CD8-positive, alpha-beta memory T cell (primary cell): ENCODE measurements at regions of chr19 and their contacts with region 1.

Region 1: DNA sequence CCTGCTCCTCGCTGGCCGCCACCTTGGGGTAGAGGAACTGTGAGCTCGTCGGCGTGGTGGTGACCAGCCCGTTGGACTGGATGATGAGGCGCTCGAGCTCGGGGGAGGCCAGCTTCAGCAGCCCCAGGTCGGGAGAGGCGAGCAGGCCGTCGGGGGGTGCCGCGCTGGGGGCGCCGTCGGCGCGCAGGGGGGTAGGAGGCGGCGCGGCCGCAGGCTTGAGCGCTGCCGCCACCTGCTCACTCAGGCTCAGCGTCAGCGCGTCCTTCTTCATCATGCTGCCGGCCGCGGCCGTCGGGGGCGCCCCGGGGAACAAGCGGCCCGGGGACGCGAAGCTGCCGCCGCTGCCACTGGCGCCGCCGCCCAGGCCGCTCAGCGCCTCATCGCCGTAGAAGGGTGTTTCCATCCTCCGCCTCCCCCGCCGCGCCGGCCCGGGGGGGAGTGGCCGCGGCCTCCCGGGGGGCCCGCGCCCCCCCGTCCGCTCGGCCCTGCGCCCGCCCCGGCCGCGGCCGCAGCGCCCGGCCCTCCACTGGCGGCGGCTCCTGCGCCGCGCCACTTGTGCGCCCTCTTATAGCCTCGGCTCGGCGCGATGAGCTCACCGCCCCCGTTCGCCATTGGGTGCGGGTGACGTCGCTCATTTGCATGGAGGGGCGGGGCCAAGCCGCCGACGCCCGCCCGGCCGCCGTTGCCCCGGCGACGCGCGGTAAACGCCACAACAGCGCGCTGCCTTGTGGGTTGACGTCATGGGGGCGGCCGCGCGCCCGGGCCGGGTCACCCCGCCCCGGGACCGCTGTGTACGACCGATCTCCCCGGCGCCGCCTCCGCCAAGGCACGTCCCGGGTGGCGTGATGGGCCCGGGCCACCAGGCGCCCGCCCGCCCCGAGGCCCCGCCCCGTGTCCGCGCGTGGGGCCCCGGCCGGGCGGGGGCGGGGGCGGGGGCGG is at the start of gene JUND:
- DNase-seq: peak; percentile 97 to 99 (median 99)
- H3K4me3 ChIP-seq: peak within 1 kb of the TSS; percentile 98
- H3K4me3 Mint-ChIP-seq: peak within 1 kb of the TSS; percentile 89 to 98 (median 98)
- H3K27ac ChIP-seq: peak within 1 kb of the TSS; percentile 100
- H3K27ac Mint-ChIP-seq: peak within 1 kb of the TSS; percentile 95 to 99 (median 98)
- H3K4me1 ChIP-seq: peaks cover 41% of the 10 kb centered on the region
- H3K4me1 Mint-ChIP-seq: peaks cover 38 to 56% (median 49%) of the 10 kb centered on the region in 3 donors
- H3K27me3 ChIP-seq: no peaks in the 10 kb centered on the region
- H3K27me3 Mint-ChIP-seq: peaks cover 0 to 42% of the 10 kb centered on the region in 2 donors
- total RNA-seq, gene JUND: 300 to 327 TPM

Region 2: DNA sequence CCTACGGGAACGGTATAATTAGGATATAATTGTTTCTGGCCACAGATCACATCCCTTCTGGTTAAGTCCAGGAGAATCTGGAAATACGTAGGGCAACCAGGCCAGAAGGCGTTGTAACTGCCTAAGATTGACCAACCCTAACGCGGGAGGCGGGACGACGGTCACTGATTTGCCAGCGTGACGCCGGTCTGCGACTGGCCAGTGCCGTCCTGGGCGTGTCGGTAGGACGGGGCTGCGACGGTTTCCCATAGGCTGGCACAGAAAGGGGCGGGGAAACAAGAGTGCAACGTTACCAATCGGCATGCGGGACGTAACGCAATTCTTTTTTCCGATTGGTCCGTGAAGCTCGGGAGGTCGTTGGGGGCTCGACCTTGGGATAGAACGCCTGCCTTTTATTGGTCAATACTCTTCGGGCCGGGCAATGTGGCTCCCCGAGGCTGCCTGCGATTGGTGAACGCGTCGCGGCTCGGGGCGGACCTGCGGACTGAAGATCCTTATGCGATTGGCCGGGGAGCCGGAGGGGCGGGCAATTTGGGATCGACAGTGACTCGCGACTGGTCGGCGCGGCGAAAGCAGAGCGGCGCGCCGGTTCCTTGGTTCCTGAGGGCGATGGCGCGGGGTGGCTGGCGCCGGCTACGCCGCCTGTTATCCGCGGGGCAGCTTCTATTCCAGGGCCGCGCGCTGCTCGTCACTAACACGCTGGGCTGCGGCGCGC is 88.5 kb before region 1 on chr19 and contains the start of gene MPV17L2:
- CTCF ChIA-PET with region 1: interaction called, 16 read pairs
- POLR2A ChIA-PET with region 1: interaction called, 40 read pairs
- DNase-seq: peak; percentile 98 to 99 (median 99)
- H3K4me3 ChIP-seq: peak within 1 kb of the TSS; percentile 74
- H3K4me3 Mint-ChIP-seq: peak within 1 kb of the TSS; percentile 82 to 95 (median 89)
- H3K27ac ChIP-seq: peak within 1 kb of the TSS; percentile 71
- H3K27ac Mint-ChIP-seq: peak within 1 kb of the TSS; percentile 76 to 98 (median 96)
- H3K4me1 ChIP-seq: peaks cover 16% of the 10 kb centered on the region
- H3K4me1 Mint-ChIP-seq: peaks cover 21 to 28% (median 22%) of the 10 kb centered on the region in 3 donors
- H3K27me3 ChIP-seq: no peaks in the 10 kb centered on the region
- H3K27me3 Mint-ChIP-seq: peaks cover 0 to 3% of the 10 kb centered on the region in 2 donors
- total RNA-seq, gene MPV17L2: 24.2 to 24.6 TPM

Region 3: GRCh38 chr19:18233224-18233825 is 48.0 kb before region 1 on chr19:
- CTCF ChIA-PET with region 1: no interaction called
- POLR2A ChIA-PET with region 1: no interaction called
- DNase-seq: peak; percentile 34 to 58 (median 35)
- H3K4me3 ChIP-seq: no peak overlapping the region
- H3K4me3 Mint-ChIP-seq: no peak overlapping the region
- H3K27ac ChIP-seq: no peak overlapping the region
- H3K27ac Mint-ChIP-seq: no peak overlapping the region
- H3K4me1 ChIP-seq: no peaks in the 10 kb centered on the region
- H3K4me1 Mint-ChIP-seq: no peaks in the 10 kb centered on the region
- H3K27me3 ChIP-seq: peaks cover 26% of the 10 kb centered on the region
- H3K27me3 Mint-ChIP-seq: peaks cover 60 to 71% of the 10 kb centered on the region in 2 donors

Region 4: GRCh38 chr19:18291590-18292461 is 10.5 kb after region 1 on chr19:
- CTCF ChIA-PET with region 1: interaction called, 96 read pairs
- POLR2A ChIA-PET with region 1: interaction called, 192 read pairs
- DNase-seq: peak; percentile 75 to 89 (median 81)
- H3K4me3 ChIP-seq: peak overlapping the region; percentile 86
- H3K4me3 Mint-ChIP-seq: peak overlapping the region; percentile 80 to 95 (median 90)
- H3K27ac ChIP-seq: peak overlapping the region; percentile 99
- H3K27ac Mint-ChIP-seq: peak overlapping the region; percentile 96 to 99 (median 97)
- H3K4me1 ChIP-seq: peaks cover 52% of the 10 kb centered on the region
- H3K4me1 Mint-ChIP-seq: peaks cover 41 to 62% (median 61%) of the 10 kb centered on the region in 3 donors
- H3K27me3 ChIP-seq: no peaks in the 10 kb centered on the region
- H3K27me3 Mint-ChIP-seq: peaks cover 0 to 3% of the 10 kb centered on the region in 2 donors

Region 5: GRCh38 chr19:18310118-18310909 is 29.0 kb after region 1 on chr19:
- CTCF ChIA-PET with region 1: interaction called, 299 read pairs
- POLR2A ChIA-PET with region 1: interaction called, 283 read pairs
- DNase-seq: no peak
- H3K4me3 ChIP-seq: no peak overlapping the region
- H3K4me3 Mint-ChIP-seq: no peak overlapping the region
- H3K27ac ChIP-seq: no peak overlapping the region
- H3K27ac Mint-ChIP-seq: peak overlapping the region in 5 of 8 donors; percentile 17 to 87 (median 37)
- H3K4me1 ChIP-seq: peaks cover 23% of the 10 kb centered on the region
- H3K4me1 Mint-ChIP-seq: peaks cover 22 to 33% (median 27%) of the 10 kb centered on the region in 3 donors
- H3K27me3 ChIP-seq: no peaks in the 10 kb centered on the region
- H3K27me3 Mint-ChIP-seq: no peaks in the 10 kb centered on the region

Region 6: GRCh38 chr19:18340190-18340989 is 59.0 kb after region 1 on chr19 and contains the start of gene PGPEP1:
- CTCF ChIA-PET with region 1: interaction called, 436 read pairs
- POLR2A ChIA-PET with region 1: interaction called, 18 read pairs
- DNase-seq: peak; percentile 50 to 66 (median 58)
- H3K4me3 ChIP-seq: peak within 1 kb of the TSS; percentile 81
- H3K4me3 Mint-ChIP-seq: peak within 1 kb of the TSS; percentile 83 to 99 (median 90)
- H3K27ac ChIP-seq: peak within 1 kb of the TSS; percentile 82
- H3K27ac Mint-ChIP-seq: peak within 1 kb of the TSS; percentile 73 to 95 (median 90)
- H3K4me1 ChIP-seq: peaks cover 18% of the 10 kb centered on the region
- H3K4me1 Mint-ChIP-seq: peaks cover 10 to 24% (median 24%) of the 10 kb centered on the region in 3 donors
- H3K27me3 ChIP-seq: no peaks in the 10 kb centered on the region
- H3K27me3 Mint-ChIP-seq: peaks cover 0 to 2% of the 10 kb centered on the region in 2 donors
- total RNA-seq, gene PGPEP1: 27.3 to 27.7 TPM